Tibial artery (tissue), 4 donors: ENCODE measurements at regions of chr16 and their contacts with region 1.

Region 1: GRCh38 chr16:66406534-66407221 is 20.4 kb upstream of the BEAN1 start:
- DNase-seq: peak; percentile 87 to 90
- H3K4me3 ChIP-seq: peak overlapping the region; percentile 40 to 48
- H3K27ac ChIP-seq: no peak overlapping the region
- H3K4me1 ChIP-seq: peaks cover 0 to 14% (median 6%) of the 10 kb centered on the region in 4 donors
- H3K27me3 ChIP-seq: peaks cover 0 to 24% of the 10 kb centered on the region in 2 donors
- CTCF ChIP-seq: peak; percentile 81 to 92

Region 2: GRCh38 chr16:66483689-66484481 is 77.2 kb after region 1 on chr16:
- intact Hi-C with region 1: loop called (anchors 2 kb)
- DNase-seq: peak; percentile 76 to 85
- H3K4me3 ChIP-seq: no peak overlapping the region
- H3K27ac ChIP-seq: no peak overlapping the region
- H3K4me1 ChIP-seq: peaks cover 0 to 26% (median 22%) of the 10 kb centered on the region in 4 donors
- H3K27me3 ChIP-seq: no peaks in the 10 kb centered on the region
- CTCF ChIP-seq: peak; percentile 83 to 93

Region 3: GRCh38 chr16:66588981-66589713 is 182.5 kb after region 1 on chr16:
- intact Hi-C with region 1: loop called (anchors 5 kb)
- DNase-seq: peak in 1 of 2 donors; percentile 51
- H3K4me3 ChIP-seq: no peak overlapping the region
- H3K27ac ChIP-seq: no peak overlapping the region
- H3K4me1 ChIP-seq: no peaks in the 10 kb centered on the region
- H3K27me3 ChIP-seq: no peaks in the 10 kb centered on the region
- CTCF ChIP-seq: peak; percentile 44 to 53